Head of caudate nucleus (tissue), 42 donors: ENCODE measurements at regions of chrX and their contacts with region 1.

Region 1: DNA sequence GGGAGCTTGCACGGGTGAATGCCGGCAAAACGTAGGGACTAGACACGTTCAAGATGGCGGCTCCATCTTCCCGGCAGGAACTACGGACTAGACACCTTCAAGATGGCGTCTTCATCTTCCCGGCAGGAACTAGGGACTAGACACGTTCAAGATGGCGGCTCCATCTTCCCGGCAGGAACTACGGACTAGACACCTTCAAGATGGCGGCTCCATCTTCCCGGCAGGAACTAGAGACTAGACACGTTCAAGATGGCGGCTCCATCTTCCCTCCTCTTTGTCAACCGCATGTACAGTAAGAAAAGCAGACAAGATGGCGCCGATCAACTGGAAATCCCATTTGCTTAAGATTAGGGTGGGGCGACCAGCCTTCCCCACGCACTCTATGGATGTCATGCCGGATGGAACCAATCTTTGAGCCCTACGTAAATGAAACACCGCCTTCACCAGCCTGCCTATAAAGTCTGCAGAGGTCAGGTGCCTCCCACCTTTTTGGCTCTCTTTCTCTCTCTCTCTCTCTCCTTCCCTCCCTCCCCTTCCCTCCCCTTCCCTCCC is 222.4 kb downstream of the CRLF2 start:
- DNase-seq: peak in 41 of 42 donors; percentile 19 to 97 (median 85)

Region 2: GRCh38 chrX:2325076-2325784 is 1335.2 kb after region 1 on chrX:
- intact Hi-C with region 1: loop called (anchors 5 kb)
- DNase-seq: peak in 41 of 42 donors; percentile 39 to 95 (median 85)